Right ventricle myocardium inferior (tissue), 1 donor: ENCODE measurements at regions of chr11 and their contacts with region 1.

Region 1: DNA sequence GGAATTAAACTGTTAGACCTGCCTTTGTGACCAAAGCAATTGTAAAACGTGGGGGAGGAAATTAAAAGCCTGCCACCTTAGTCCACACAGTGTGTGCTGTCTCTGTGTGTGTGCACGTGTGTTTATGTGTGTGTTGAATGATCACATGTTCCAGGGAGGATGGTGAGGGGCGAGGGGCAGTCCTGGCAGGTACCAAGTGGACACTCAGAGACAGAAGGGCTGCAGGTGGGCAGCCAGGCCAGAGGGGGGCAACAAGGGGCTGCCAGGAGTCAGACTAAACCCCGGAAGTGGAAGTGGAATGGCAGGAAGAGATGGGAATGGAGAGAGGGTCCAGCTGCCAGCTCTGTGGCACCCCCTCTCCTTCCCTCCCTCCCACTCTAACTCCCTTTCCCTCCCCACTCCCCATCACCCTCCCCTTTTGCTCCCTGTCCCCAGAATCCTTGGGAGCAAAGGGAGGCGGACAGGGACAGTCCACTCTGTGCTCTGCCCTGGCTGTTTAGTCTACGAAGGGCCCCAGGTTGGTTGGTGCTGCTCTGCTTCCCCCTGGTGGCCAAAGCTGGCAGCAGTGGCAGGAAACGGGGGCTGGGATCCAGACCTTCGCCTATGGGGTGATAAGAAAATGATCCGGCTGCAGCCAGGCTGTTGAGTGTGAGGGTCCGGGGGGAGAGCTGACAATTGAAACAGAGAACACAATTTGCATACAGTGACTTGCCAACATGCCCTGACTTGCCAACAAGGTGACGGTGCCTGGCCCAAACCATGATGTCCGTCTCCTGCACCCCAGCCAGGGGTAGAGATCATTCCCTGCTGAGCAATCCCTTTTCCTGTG is 24.4 kb downstream of the P2RY2 start:
- DNase-seq: peak; percentile 86
- ATAC-seq: peak; percentile 59

Region 2: GRCh38 chr11:72722050-72722748 is 520.3 kb before region 1 on chr11:
- intact Hi-C with region 1: loop called (anchors 10 kb)
- DNase-seq: peak; percentile 94
- ATAC-seq: peak; percentile 81

Region 3: GRCh38 chr11:72924568-72925190 is 317.8 kb before region 1 on chr11:
- intact Hi-C with region 1: loop called (anchors 10 kb)
- DNase-seq: no peak
- ATAC-seq: peak; percentile 52

Region 4: GRCh38 chr11:73184953-73185671 is 57.4 kb before region 1 on chr11:
- intact Hi-C with region 1: loop called (anchors 1 kb)
- DNase-seq: peak; percentile 82
- ATAC-seq: peak; percentile 27

Region 5: DNA sequence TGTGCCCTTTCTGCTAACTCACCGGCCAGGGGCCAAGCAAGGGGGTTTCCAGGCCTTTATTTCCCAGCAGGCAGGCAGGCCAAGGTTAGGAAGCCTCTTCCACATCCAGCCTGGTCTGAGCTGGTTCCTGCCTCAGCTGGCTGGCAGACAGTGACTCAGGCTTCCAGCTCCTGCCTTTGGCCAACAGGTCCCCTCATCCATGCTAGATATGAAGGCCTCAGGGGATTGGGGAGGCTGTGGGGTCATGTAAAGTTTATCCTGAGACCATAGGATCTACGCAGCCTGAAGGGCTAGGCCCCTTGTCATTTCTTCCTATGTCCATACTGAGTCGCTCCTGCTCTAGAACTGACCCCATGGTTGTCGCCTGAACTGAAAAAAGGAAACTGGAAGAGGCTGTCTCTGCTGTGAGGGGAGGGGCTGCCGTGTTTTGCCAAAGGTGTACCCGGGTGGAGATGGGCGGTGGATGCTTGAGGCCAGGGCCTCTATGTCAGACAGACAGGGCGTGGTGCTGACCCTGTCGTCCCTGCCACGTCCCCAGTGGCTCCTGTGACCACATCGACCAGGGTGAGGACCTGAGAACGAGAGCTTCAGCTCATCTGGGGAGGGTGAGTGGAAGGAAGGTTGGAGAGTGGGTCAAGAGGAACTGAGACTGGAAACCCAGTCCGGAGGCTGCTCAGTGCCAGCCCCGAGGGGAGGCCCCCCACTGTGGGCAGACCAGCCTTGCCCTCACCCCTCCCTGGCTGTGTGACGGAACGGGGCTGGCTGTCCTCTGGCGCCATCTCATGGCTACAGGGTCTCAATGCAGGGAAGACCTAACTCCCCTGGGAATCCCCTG is 46.6 kb after region 1 on chr11:
- intact Hi-C with region 1: loop called (anchors 1 kb)
- DNase-seq: peak; percentile 88
- ATAC-seq: peak; percentile 85